Right lobe of liver (tissue), 6 donors: ENCODE measurements at regions of chr22 and their contacts with region 1.

Region 1: GRCh38 chr22:49929208-49930136 is 11.0 kb downstream of the CRELD2 start:
- DNase-seq: peak; percentile 73 to 80 (median 76)
- ATAC-seq: peak; percentile 51 to 70 (median 56)
- H3K4me3 ChIP-seq: no peak overlapping the region
- H3K27ac ChIP-seq: no peak overlapping the region
- H3K4me1 ChIP-seq: peaks cover 0 to 21% (median 13%) of the 10 kb centered on the region in 4 donors
- H3K27me3 ChIP-seq: no peaks in the 10 kb centered on the region
- CTCF ChIP-seq: peak; percentile 80 to 99 (median 90)
- POLR2A ChIP-seq: no peak

Region 2: GRCh38 chr22:49869845-49870712 is 59.4 kb before region 1 on chr22:
- intact Hi-C with region 1: no loop called
- DNase-seq: no peak
- ATAC-seq: no peak
- H3K4me3 ChIP-seq: no peak overlapping the region
- H3K27ac ChIP-seq: no peak overlapping the region
- H3K4me1 ChIP-seq: peaks cover 0 to 7% (median under 1%) of the 10 kb centered on the region in 4 donors
- H3K27me3 ChIP-seq: no peaks in the 10 kb centered on the region
- CTCF ChIP-seq: no peak
- POLR2A ChIP-seq: no peak

Region 3: DNA sequence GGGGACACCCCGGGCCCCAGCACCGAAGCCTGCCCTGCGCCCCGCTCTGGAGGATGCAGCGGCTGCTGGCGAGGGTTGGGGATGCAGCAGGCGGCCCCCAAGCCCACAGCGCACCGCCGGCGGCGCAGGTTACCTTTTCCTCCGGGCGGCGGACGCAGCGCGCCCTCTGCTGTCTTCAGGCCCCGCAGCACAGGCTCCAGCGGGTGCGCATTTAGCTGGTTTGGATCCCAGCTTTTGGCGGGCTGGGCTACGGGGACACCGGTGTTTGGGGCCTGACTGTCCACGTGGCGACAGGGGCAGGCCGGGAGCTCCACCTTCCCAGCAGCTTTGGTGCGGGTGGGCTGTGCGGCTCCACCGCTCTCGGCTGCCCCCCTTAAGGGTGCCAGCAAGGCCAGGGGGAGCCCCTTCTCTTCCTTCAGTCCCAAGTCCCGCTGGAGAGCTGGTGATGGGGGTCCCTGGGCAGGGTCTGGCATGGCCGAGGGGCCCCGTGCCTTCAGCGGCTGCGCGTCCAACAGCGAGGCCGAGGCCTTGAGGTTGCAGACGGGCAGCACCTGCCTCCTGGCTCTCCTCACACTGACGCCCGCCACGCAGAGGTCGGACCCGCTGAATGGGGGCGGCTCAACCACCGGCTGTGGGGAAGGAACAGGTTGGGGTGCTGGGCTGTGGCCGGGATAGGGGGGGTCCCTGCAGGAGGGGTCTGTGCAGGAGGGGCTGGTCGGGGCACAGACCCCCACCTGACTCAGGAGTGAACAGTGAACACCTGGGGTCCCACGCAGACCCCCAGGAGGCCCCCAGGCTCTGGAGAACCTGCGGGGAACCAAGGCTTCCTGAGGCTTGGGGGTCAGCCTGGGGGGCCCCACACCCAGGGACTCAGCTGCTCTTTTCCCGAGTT is 101.1 kb after region 1 on chr22:
- intact Hi-C with region 1: loop called (anchors 2 to 5 kb)
- DNase-seq: peak; percentile 77 to 80 (median 79)
- ATAC-seq: peak; percentile 90 to 97 (median 91)
- H3K4me3 ChIP-seq: no peak overlapping the region
- H3K27ac ChIP-seq: no peak overlapping the region
- H3K4me1 ChIP-seq: peaks cover 0 to 8% (median 0%) of the 10 kb centered on the region in 4 donors
- H3K27me3 ChIP-seq: no peaks in the 10 kb centered on the region
- CTCF ChIP-seq: peak; percentile 88 to 97 (median 92)
- POLR2A ChIP-seq: no peak